Activated CD8-positive, alpha-beta T cell treated with anti-CD3 and anti-CD28 coated beads for 36 hours (primary cell): ENCODE measurements at regions of chr16 and their contacts with region 1.

Region 1: GRCh38 chr16:46961373-46962353 is 11.8 kb downstream of the DNAJA2 start:
- DNase-seq: peak; percentile 75
- ATAC-seq: peak; percentile 98
- H3K4me3 Mint-ChIP-seq: peak overlapping the region; percentile 9
- H3K27ac Mint-ChIP-seq: peak overlapping the region; percentile 91
- H3K4me1 Mint-ChIP-seq: peaks cover 34% of the 10 kb centered on the region
- H3K27me3 Mint-ChIP-seq: no peaks in the 10 kb centered on the region
- CTCF ChIP-seq: no peak

Region 2: DNA sequence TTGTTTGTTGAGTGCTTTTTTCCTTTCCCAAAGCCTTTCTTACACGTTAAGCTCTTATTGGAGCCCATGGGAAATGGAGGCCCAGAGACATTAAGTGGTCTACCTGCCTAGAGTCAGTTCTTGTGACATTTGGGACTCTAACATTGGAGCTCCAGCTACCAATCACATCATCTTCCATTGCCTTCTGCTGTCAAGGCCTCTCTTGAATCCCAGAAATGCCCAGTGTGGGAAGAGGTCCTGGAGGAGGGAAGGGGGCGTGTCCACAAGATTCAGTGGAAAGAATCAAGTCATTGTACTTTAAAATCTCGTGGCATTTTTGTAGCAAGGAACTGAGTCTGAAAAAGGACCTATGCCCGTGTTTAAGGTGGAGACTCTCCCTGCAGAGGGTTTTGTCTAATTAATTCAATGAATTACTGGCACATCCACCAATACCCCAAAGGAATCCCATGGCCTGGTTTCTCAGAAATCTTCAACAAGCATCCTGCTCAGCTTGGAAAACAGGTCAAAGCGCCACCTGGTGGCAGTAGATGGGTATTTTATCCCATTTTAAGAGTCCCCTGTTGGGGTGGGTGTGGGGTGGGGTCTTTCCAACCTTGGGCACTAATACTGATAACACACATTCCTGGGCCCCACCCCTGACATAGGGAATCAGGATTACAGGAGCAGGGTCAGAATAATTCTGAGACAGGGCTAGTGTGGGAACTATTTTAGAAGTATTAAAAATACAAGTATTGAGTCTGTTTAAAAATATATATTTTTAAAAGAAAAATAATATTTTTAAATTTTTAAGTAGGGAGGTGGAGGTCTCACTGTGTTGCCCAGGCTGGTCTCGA is 52.9 kb before region 1 on chr16:
- CTCF ChIA-PET with region 1: no interaction called
- POLR2A ChIA-PET with region 1: no interaction called
- intact Hi-C with region 1: no loop called
- DNase-seq: peak; percentile 68
- ATAC-seq: peak; percentile 30
- H3K4me3 Mint-ChIP-seq: no peak overlapping the region
- H3K27ac Mint-ChIP-seq: no peak overlapping the region
- H3K4me1 Mint-ChIP-seq: peaks cover 9% of the 10 kb centered on the region
- H3K27me3 Mint-ChIP-seq: no peaks in the 10 kb centered on the region
- CTCF ChIP-seq: peak; percentile 79

Region 3: GRCh38 chr16:46973207-46973995 is 11.7 kb after region 1 on chr16 and contains the start of gene DNAJA2:
- CTCF ChIA-PET with region 1: interaction called, 13 read pairs
- POLR2A ChIA-PET with region 1: interaction called, 39 read pairs
- intact Hi-C with region 1: no loop called
- DNase-seq: peak; percentile 95
- ATAC-seq: peak; percentile 90
- H3K4me3 Mint-ChIP-seq: peak within 1 kb of the TSS; percentile 92
- H3K27ac Mint-ChIP-seq: peak within 1 kb of the TSS; percentile 99
- H3K4me1 Mint-ChIP-seq: peaks cover 51% of the 10 kb centered on the region
- H3K27me3 Mint-ChIP-seq: no peaks in the 10 kb centered on the region
- CTCF ChIP-seq: no peak
- total RNA-seq, gene DNAJA2: 68.4 to 70.2 TPM